ENCODE measurements at regions of chr20 and their contacts with region 1.

Region 1: GRCh38 chr20:17525650-17526049 is 5.5 kb downstream of the BFSP1 start:
- DNase-seq: no peak
- ATAC-seq: peak in 1 of 8 donors; percentile 50
- H3K4me3 ChIP-seq: no peak overlapping the region
- H3K27ac ChIP-seq: no peak overlapping the region
- H3K4me1 ChIP-seq: peaks cover 0 to 13% (median 9%) of the 10 kb centered on the region in 9 donors
- H3K27me3 ChIP-seq: peaks cover 0 to 11% (median 0%) of the 10 kb centered on the region in 7 donors
- CTCF ChIP-seq: no peak

Region 2: GRCh38 chr20:17457588-17458190 is 68.0 kb before region 1 on chr20:
- intact Hi-C with region 1: no loop called
- DNase-seq: no peak
- ATAC-seq: no peak
- H3K4me3 ChIP-seq: no peak overlapping the region
- H3K27ac ChIP-seq: no peak overlapping the region
- H3K4me1 ChIP-seq: no peaks in the 10 kb centered on the region
- H3K27me3 ChIP-seq: peaks cover 0 to 34% (median 22%) of the 10 kb centered on the region in 7 donors
- CTCF ChIP-seq: no peak

Region 3: GRCh38 chr20:17910828-17911294 is 385.2 kb after region 1 on chr20:
- intact Hi-C with region 1: loop called in 2 of 10 experiments (anchors 10 kb)
- DNase-seq: peak in 1 of 2 donors; percentile 65
- ATAC-seq: peak; percentile 83 to 94 (median 90)
- H3K4me3 ChIP-seq: no peak overlapping the region
- H3K27ac ChIP-seq: peak overlapping the region in 9 of 10 donors; percentile 31 to 74 (median 49)
- H3K4me1 ChIP-seq: peaks cover 9 to 23% (median 21%) of the 10 kb centered on the region in 9 donors
- H3K27me3 ChIP-seq: no peaks in the 10 kb centered on the region
- CTCF ChIP-seq: peak in 1 of 9 donors; percentile 12